ENCODE measurements at regions of chr11 and their contacts with region 1.

Region 1: GRCh38 chr11:106021967-106022794 is at the start of gene MSANTD4:
- DNase-seq: peak; percentile 90
- ATAC-seq: peak; percentile 96
- H3K4me3 Mint-ChIP-seq: peak within 1 kb of the TSS; percentile 98
- H3K27ac Mint-ChIP-seq: peak within 1 kb of the TSS; percentile 92
- H3K4me1 Mint-ChIP-seq: peaks cover 43% of the 10 kb centered on the region
- H3K27me3 Mint-ChIP-seq: peaks cover 2% of the 10 kb centered on the region
- CTCF ChIP-seq: no peak
- total RNA-seq, gene MSANTD4: 17.4 and 18.9 TPM in 2 replicates

Region 2: GRCh38 chr11:105092256-105093239 is 929.6 kb before region 1 on chr11:
- CTCF ChIA-PET with region 1: no interaction called
- POLR2A ChIA-PET with region 1: no interaction called
- intact Hi-C with region 1: no loop called
- DNase-seq: no peak
- ATAC-seq: no peak
- H3K4me3 Mint-ChIP-seq: no peak overlapping the region
- H3K27ac Mint-ChIP-seq: no peak overlapping the region
- H3K4me1 Mint-ChIP-seq: no peaks in the 10 kb centered on the region
- H3K27me3 Mint-ChIP-seq: no peaks in the 10 kb centered on the region
- CTCF ChIP-seq: no peak

Region 3: GRCh38 chr11:106047636-106048035 is 25.5 kb after region 1 on chr11:
- CTCF ChIA-PET with region 1: no interaction called
- POLR2A ChIA-PET with region 1: no interaction called
- intact Hi-C with region 1: no loop called
- DNase-seq: no peak
- ATAC-seq: no peak
- H3K4me3 Mint-ChIP-seq: no peak overlapping the region
- H3K27ac Mint-ChIP-seq: no peak overlapping the region
- H3K4me1 Mint-ChIP-seq: no peaks in the 10 kb centered on the region
- H3K27me3 Mint-ChIP-seq: peaks cover 14% of the 10 kb centered on the region
- CTCF ChIP-seq: no peak

Region 4: GRCh38 chr11:106063009-106063408 is 40.8 kb after region 1 on chr11:
- CTCF ChIA-PET with region 1: no interaction called
- POLR2A ChIA-PET with region 1: no interaction called
- intact Hi-C with region 1: loop called (anchors 5 kb)
- DNase-seq: no peak
- ATAC-seq: peak; percentile 76
- H3K4me3 Mint-ChIP-seq: no peak overlapping the region
- H3K27ac Mint-ChIP-seq: no peak overlapping the region
- H3K4me1 Mint-ChIP-seq: peaks cover 15% of the 10 kb centered on the region
- H3K27me3 Mint-ChIP-seq: no peaks in the 10 kb centered on the region
- CTCF ChIP-seq: no peak